ENCODE measurements at regions of chr12 and their contacts with region 1.

Region 1: GRCh38 chr12:67452119-67452805 is 183.1 kb downstream of the CAND1 start:
- H3K4me3 Mint-ChIP-seq: no peak overlapping the region
- H3K27ac Mint-ChIP-seq: peak overlapping the region; percentile 64
- H3K4me1 Mint-ChIP-seq: peaks cover 72% of the 10 kb centered on the region
- H3K27me3 Mint-ChIP-seq: peaks cover 51% of the 10 kb centered on the region

Region 2: DNA sequence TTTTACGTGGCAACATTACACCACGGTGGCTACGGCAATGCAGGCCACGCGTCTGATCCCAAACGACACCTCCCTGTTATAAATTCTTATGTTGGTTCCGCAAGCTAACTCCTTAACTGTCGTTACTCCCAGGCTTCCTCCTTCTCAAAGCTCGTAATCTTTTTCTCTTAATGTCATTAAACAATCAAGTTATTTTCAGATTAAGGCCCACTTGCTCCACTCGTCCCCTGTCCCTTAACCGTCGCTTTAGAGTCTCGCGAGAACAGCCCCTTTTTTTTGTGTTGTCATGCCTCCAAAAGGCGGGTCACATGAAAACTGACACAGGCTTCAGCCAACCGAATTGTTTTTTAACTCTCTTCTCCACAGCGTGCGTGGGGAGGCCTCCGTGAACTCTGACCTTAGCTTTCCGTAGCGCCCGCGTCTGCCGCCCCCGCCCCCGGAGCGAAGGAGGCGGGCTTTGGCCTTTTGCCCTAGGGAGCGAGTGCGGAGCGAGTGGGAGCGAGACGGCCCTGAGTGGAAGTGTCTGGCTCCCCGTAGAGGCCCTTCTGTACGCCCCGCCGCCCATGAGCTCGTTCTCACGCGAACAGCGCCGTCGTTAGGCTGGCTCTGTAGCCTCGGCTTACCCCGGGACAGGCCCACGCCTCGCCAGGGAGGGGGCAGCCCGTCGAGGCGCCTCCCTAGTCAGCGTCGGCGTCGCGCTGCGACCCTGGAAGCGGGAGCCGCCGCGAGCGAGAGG is 183.2 kb before region 1 on chr12 and contains the start of gene CAND1:
- intact Hi-C with region 1: loop called (anchors 5 kb)
- H3K4me3 Mint-ChIP-seq: peak within 1 kb of the TSS; percentile 79
- H3K27ac Mint-ChIP-seq: peak within 1 kb of the TSS; percentile 97
- H3K4me1 Mint-ChIP-seq: peaks cover 30% of the 10 kb centered on the region
- H3K27me3 Mint-ChIP-seq: no peaks in the 10 kb centered on the region

Region 3: DNA sequence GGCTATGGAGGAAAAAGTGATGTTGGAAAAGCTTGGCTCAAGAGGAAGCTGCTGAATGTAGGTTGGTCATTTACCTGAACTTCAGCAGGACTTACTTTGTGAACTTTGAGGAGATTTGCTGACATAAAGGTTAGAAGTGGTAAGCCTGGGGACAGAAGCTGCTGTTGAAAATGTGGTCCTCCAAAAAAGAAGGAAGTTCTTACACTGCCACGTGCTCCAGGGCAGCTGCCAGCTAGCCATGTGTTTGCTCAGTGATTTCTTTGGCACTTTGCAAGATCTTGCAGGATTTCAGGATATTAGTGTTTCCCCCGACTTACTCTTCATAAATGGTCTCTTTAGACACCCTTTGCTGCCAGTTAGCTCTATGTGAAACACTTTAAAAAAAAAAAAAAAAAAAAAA is 181.4 kb after region 1 on chr12:
- intact Hi-C with region 1: loop called (anchors 2 kb)
- H3K4me3 Mint-ChIP-seq: no peak overlapping the region
- H3K27ac Mint-ChIP-seq: peak overlapping the region; percentile 60
- H3K4me1 Mint-ChIP-seq: peaks cover 26% of the 10 kb centered on the region
- H3K27me3 Mint-ChIP-seq: peaks cover 19% of the 10 kb centered on the region

Region 4: DNA sequence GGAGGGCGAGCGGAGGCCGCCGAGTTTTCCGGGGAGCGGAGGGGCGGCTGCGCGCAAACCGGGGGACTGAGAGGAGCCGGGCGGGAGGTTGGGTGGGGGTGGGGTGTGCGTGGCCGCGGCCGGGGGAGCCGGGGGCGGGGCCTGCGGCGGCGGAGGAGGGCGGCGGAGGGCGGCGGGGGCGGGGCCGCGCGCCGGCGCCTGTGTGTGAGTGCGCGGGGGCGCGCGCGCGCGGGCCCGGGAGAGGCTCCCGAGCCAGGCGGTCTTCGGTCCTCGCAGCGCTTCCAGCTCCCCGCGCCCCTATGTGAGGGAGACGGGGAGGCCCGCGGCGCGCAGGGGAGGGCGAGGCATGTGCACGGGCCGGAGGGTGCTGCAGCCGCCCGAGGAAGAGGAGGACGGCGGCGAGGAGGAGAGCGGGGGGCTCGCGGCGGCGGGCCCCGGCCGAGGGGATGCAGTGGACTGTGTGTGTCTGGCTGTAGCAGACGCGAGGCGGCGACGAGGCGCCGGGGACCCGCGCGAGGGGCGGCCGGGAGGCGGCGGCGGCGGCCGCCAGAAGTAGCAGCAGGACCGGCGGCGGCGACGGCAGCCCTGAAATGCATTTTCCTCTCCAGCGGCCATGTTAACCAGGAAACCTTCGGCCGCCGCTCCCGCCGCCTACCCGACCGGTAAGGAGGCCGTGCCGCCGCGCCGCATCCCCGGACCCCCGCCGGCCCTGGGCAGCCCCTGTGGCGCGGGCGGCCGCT is 196.4 kb after region 1 on chr12 and contains the start of gene DYRK2:
- intact Hi-C with region 1: loop called (anchors 5 kb)
- H3K4me3 Mint-ChIP-seq: peak within 1 kb of the TSS; percentile 91
- H3K27ac Mint-ChIP-seq: peak within 1 kb of the TSS; percentile 86
- H3K4me1 Mint-ChIP-seq: peaks cover 40% of the 10 kb centered on the region
- H3K27me3 Mint-ChIP-seq: peaks cover 16% of the 10 kb centered on the region